ENCODE measurements at regions of chr14 and their contacts with region 1.

Region 1: GRCh38 chr14:74881431-74882361 is at the start of gene DLST:
- DNase-seq: peak; percentile 76 to 89 (median 81)
- H3K4me3 ChIP-seq: peak within 1 kb of the TSS; percentile 92
- H3K4me3 Mint-ChIP-seq: peak within 1 kb of the TSS; percentile 97 to 100 (median 99)
- H3K27ac ChIP-seq: peak within 1 kb of the TSS; percentile 93
- H3K27ac Mint-ChIP-seq: peak within 1 kb of the TSS; percentile 91 to 100 (median 99)
- H3K4me1 ChIP-seq: peaks cover 38% of the 10 kb centered on the region
- H3K4me1 Mint-ChIP-seq: peaks cover 59 to 76% (median 71%) of the 10 kb centered on the region in 3 donors
- H3K27me3 ChIP-seq: no peaks in the 10 kb centered on the region
- H3K27me3 Mint-ChIP-seq: peaks cover 0 to under 1% of the 10 kb centered on the region in 2 donors
- total RNA-seq, gene DLST: 160 to 161 TPM

Region 2: DNA sequence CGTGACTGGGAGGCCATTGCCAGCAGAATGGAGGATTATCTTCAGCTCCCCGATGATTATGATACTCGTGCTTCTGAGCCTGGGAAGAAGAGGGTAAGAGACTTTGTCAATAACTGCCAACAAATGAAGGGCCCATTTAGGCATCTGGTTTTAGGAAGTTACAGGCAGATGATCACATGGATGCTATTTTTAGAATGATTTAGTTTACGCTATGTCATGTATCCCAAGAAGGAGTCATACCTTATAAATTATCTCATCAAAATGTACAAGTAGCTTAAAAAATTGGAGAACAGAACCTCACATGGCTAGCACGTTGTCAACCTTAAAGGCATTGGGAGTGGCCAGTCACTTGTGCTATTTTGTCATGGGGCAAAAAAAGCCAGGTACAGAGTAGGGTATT is 52.4 kb before region 1 on chr14:
- CTCF ChIA-PET with region 1: no interaction called
- POLR2A ChIA-PET with region 1: no interaction called
- DNase-seq: no peak
- H3K4me3 ChIP-seq: no peak overlapping the region
- H3K4me3 Mint-ChIP-seq: no peak overlapping the region
- H3K27ac ChIP-seq: no peak overlapping the region
- H3K27ac Mint-ChIP-seq: peak overlapping the region in 1 of 8 donors; percentile 42
- H3K4me1 ChIP-seq: peaks cover under 1% of the 10 kb centered on the region
- H3K4me1 Mint-ChIP-seq: peaks cover 0 to 4% (median under 1%) of the 10 kb centered on the region in 3 donors
- H3K27me3 ChIP-seq: no peaks in the 10 kb centered on the region
- H3K27me3 Mint-ChIP-seq: no peaks in the 10 kb centered on the region

Region 3: GRCh38 chr14:74841230-74842207 is 40.2 kb before region 1 on chr14:
- CTCF ChIA-PET with region 1: interaction called, 3 read pairs
- POLR2A ChIA-PET with region 1: interaction called, 11 read pairs
- DNase-seq: peak in 1 of 5 donors; percentile 11
- H3K4me3 ChIP-seq: no peak overlapping the region
- H3K4me3 Mint-ChIP-seq: peak overlapping the region in 6 of 7 donors; percentile 26 to 42 (median 36)
- H3K27ac ChIP-seq: no peak overlapping the region
- H3K27ac Mint-ChIP-seq: peak overlapping the region; percentile 69 to 99 (median 90)
- H3K4me1 ChIP-seq: peaks cover 68% of the 10 kb centered on the region
- H3K4me1 Mint-ChIP-seq: peaks cover 51 to 62% (median 60%) of the 10 kb centered on the region in 3 donors
- H3K27me3 ChIP-seq: no peaks in the 10 kb centered on the region
- H3K27me3 Mint-ChIP-seq: no peaks in the 10 kb centered on the region

Region 4: DNA sequence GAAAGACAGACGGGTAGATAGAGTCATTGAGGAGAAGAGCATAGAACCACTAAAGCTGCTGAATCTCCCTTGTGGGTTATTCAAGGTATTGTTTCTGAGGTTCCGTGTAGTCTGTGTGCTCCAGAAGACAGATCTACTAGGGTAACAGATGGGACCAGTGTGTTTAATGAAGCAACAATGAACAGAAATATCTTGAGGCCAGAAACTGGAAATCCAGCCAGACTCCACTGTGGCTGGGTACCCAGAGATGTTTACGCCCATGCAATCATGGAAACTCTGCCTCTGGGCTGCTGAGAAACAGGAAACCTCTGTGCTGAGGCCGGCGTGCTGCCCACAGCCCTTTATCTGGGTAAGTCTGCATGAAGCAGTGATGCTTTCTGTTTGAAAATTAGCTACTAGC is 14.0 kb before region 1 on chr14:
- CTCF ChIA-PET with region 1: interaction called, 125 read pairs
- POLR2A ChIA-PET with region 1: interaction called, 14 read pairs
- DNase-seq: peak; percentile 17 to 73 (median 36)
- H3K4me3 ChIP-seq: peak overlapping the region; percentile 43
- H3K4me3 Mint-ChIP-seq: peak overlapping the region in 6 of 7 donors; percentile 0 to 73 (median 57)
- H3K27ac ChIP-seq: no peak overlapping the region
- H3K27ac Mint-ChIP-seq: peak overlapping the region; percentile 47 to 92 (median 64)
- H3K4me1 ChIP-seq: peaks cover 15% of the 10 kb centered on the region
- H3K4me1 Mint-ChIP-seq: peaks cover 22 to 27% (median 24%) of the 10 kb centered on the region in 3 donors
- H3K27me3 ChIP-seq: no peaks in the 10 kb centered on the region
- H3K27me3 Mint-ChIP-seq: no peaks in the 10 kb centered on the region

Measured in CD8-positive, alpha-beta memory T cell (primary cell).